ENCODE measurements at regions of chr1 and their contacts with region 1.

Region 1: DNA sequence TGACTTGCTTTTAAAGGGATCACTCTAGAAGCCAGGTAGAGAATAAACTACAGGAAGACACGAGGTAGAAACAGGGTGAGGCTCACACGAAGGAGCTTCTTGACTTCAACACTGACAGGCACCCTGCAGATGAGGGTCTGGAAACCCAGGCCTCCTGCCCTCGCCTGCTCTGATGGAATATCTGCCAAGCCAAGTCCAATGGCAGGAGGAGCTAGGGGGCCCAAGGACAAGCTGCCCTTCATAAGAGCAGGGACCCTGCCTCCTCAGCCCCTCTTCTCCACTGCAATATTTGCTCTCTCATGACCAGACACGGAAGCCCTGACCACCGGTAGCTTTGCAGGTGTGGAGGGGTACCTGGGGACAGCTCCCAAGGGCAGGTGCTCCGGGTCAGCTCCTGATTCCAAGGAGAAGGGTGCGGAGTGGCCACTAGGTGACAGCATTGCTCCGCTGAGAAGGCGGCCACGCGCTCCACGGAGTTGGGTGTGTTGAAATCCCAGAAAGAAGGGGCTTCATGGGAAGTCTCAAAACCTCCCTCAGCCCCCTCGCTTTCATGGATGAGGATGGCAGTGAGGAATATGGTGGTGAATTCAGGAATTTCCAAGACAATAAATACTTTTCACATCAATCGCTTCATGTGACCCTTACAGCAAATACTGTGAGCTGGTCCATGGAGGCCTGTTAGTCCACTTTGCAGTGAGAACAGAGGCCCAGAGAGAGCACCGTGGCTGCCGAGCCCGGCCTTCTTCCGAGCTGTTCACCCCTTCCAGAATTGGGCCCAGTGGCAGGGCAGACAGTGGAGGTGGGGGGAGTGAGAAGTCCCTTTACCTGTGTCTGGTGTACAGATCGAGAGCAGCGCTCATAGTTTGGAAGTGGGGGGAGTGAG is 33.2 kb upstream of the PAX7 start:
- DNase-seq: peak; percentile 66
- H3K4me3 Mint-ChIP-seq: no peak overlapping the region
- H3K27ac Mint-ChIP-seq: no peak overlapping the region
- H3K4me1 Mint-ChIP-seq: no peaks in the 10 kb centered on the region
- H3K27me3 Mint-ChIP-seq: peaks cover 24% of the 10 kb centered on the region

Region 2: DNA sequence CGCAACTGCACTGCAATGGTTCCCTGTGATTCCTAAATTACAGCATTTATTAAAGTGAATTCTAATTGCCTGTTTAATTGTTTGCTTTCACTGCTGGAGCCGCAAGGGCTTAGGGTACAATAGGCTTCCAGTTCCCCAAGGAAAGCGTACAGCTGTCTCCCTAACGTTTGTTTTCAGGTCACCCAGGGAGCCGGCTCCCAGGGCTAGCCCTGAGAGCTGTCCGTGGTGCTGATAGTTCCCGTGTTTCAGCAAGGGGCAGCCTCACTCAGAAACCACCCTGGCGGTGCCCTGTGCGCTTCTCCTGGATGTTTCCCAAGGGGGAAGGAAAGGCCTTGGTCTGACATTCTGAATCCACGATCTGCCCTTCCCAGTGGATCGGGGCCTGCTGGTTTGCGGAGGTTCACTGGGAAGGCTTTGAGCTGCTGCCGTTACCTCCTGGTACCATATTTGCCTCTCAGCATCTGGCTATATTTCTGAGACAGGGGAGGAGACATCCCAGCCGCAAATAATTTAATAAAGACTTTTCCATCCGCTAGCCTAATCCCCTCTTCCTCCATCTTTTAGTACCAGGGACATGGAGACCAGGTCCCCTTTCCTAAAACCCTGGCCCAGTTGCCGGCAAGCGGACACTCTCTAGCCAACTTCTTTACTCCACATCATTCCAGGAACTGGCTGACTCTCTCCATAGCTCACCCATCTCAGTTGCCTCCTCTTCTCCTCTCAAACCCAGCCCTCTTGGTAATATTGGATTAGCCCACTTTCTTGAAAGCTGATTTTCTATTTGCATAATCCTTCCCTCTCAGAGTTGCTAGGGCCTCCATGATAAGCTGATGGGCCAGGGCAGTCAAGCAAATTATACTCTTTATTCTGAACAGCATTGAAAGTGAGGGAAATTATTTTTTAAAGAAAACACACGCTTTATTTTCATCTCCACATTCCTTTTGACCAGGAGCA is 340.8 kb before region 1 on chr1:
- CTCF ChIA-PET with region 1: no interaction called
- POLR2A ChIA-PET with region 1: no interaction called
- intact Hi-C with region 1: no loop called
- DNase-seq: peak; percentile 38
- H3K4me3 Mint-ChIP-seq: no peak overlapping the region
- H3K27ac Mint-ChIP-seq: no peak overlapping the region
- H3K4me1 Mint-ChIP-seq: no peaks in the 10 kb centered on the region
- H3K27me3 Mint-ChIP-seq: peaks cover 18% of the 10 kb centered on the region

Region 3: DNA sequence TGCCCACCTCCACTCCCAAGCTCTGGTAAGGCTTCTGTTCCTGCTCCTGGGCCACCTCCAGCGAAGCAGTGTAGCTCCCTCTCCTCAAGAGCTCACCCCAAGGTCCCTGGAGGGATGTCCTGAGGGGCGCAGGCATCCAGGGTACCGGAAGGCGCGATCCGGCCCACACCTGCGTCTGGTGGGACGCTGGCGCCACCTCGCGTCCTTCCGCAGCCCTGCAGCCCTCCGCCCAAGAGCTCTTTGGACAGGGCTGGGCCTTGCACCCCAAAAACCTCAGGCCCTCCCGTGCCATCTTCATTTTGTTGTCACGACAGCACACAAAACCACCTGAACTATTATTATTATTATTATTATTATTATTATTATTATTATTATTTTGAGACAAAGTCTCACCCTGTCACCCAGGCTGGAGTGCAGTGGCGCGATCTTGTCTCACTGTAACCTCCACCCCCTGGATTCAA is 16.0 kb before region 1 on chr1:
- CTCF ChIA-PET with region 1: interaction called, 11 read pairs
- POLR2A ChIA-PET with region 1: no interaction called
- intact Hi-C with region 1: no loop called
- DNase-seq: peak; percentile 58
- H3K4me3 Mint-ChIP-seq: no peak overlapping the region
- H3K27ac Mint-ChIP-seq: no peak overlapping the region
- H3K4me1 Mint-ChIP-seq: no peaks in the 10 kb centered on the region
- H3K27me3 Mint-ChIP-seq: peaks cover 12% of the 10 kb centered on the region

Region 4: GRCh38 chr1:18676332-18676781 is 79.0 kb after region 1 on chr1:
- CTCF ChIA-PET with region 1: interaction called, 35 read pairs
- POLR2A ChIA-PET with region 1: no interaction called
- intact Hi-C with region 1: loop called (anchors 1 kb)
- DNase-seq: no peak
- H3K4me3 Mint-ChIP-seq: no peak overlapping the region
- H3K27ac Mint-ChIP-seq: no peak overlapping the region
- H3K4me1 Mint-ChIP-seq: no peaks in the 10 kb centered on the region
- H3K27me3 Mint-ChIP-seq: peaks cover 14% of the 10 kb centered on the region

Region 5: DNA sequence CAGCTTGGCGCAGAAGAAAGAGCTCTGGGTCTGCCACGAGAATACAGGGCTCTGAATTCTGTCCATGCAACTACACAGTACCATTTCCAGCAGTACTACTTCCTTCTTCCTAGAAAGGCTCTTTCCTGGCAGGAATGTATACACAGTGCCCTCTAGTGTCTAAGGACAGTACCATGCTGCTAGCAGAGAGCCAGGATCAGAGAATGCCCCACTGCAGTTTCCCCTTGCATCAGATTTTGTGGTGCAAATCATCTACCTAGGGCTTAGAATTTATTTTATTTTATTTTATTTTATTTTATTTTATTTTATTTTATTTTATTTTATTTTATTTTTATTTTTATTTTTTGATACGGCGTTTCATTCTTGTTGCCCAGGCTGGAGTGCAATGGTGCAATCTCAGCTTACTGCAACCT is 84.0 kb after region 1 on chr1:
- CTCF ChIA-PET with region 1: interaction called, 35 read pairs
- POLR2A ChIA-PET with region 1: no interaction called
- intact Hi-C with region 1: loop called (anchors 1 kb)
- DNase-seq: peak; percentile 10
- H3K4me3 Mint-ChIP-seq: no peak overlapping the region
- H3K27ac Mint-ChIP-seq: no peak overlapping the region
- H3K4me1 Mint-ChIP-seq: no peaks in the 10 kb centered on the region
- H3K27me3 Mint-ChIP-seq: peaks cover 17% of the 10 kb centered on the region

Region 6: GRCh38 chr1:18820791-18821641 is 223.6 kb after region 1 on chr1:
- CTCF ChIA-PET with region 1: interaction called, 42 read pairs
- POLR2A ChIA-PET with region 1: no interaction called
- intact Hi-C with region 1: loop called (anchors 2 kb)
- DNase-seq: peak; percentile 73
- H3K4me3 Mint-ChIP-seq: no peak overlapping the region
- H3K27ac Mint-ChIP-seq: no peak overlapping the region
- H3K4me1 Mint-ChIP-seq: peaks cover 1% of the 10 kb centered on the region
- H3K27me3 Mint-ChIP-seq: peaks cover 45% of the 10 kb centered on the region

Region 7: DNA sequence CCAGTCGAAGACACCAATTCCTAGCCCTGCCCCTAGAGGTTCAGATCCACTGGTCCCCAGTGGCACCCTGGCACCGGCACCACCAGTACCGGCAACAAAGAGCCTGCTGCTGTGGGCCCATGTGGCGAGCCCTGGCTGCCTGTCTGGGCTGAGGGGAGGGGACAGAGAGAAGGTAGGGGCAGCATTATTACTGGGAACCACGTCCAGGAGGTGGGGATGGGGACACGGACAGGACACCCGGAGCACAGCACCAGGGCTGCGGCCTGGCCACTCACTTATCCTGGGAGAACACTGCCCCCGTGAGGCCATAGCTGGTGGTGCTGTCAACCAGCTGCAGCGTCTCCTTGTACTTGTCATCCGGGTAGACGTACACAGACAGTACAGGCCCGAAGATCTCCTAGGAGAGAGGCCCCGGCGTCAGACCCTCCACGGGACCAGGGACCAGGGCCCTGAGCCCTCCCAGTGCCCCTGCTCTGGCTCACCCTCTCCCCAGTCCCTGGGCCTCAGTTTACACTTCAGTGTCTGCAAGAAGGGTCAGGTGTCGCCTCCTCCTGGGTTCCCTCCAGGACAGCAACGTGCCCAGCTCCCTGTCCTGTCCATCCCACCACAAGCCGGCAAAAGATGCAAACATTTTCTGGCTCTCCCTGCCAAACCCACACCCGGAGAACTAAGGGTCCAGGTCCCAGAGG is 277.9 kb after region 1 on chr1:
- CTCF ChIA-PET with region 1: interaction called, 34 read pairs
- POLR2A ChIA-PET with region 1: no interaction called
- intact Hi-C with region 1: loop called (anchors 2 kb)
- DNase-seq: peak; percentile 84
- H3K4me3 Mint-ChIP-seq: no peak overlapping the region
- H3K27ac Mint-ChIP-seq: no peak overlapping the region
- H3K4me1 Mint-ChIP-seq: no peaks in the 10 kb centered on the region
- H3K27me3 Mint-ChIP-seq: no peaks in the 10 kb centered on the region

Measured in activated CD4-positive, alpha-beta memory T cell treated with anti-CD3 and anti-CD28 coated beads for 36 hours (primary cell).